ENCODE measurements at regions of chr3 and their contacts with region 1.

Region 1: GRCh38 chr3:49411968-49412631 is at the starts of genes RHOA and TCTA:
- DNase-seq: peak; percentile 99 to 100 (median 100)
- ATAC-seq: peak; percentile 95 to 97 (median 96)
- H3K4me3 ChIP-seq: peak within 1 kb of the TSS; percentile 67 to 99 (median 86)
- H3K27ac ChIP-seq: peak within 1 kb of the TSS; percentile 91 to 99 (median 98)
- H3K4me1 ChIP-seq: peaks cover 7 to 79% (median 50%) of the 10 kb centered on the region in 12 donors
- H3K27me3 ChIP-seq: no peaks in the 10 kb centered on the region
- CTCF ChIP-seq: no peak
- POLR2A ChIP-seq: peak; percentile 90 to 96
- total RNA-seq, gene RHOA: 224 to 479 (median 291) TPM
- total RNA-seq, gene TCTA: 13.2 to 25.3 (median 16.7) TPM

Region 2: DNA sequence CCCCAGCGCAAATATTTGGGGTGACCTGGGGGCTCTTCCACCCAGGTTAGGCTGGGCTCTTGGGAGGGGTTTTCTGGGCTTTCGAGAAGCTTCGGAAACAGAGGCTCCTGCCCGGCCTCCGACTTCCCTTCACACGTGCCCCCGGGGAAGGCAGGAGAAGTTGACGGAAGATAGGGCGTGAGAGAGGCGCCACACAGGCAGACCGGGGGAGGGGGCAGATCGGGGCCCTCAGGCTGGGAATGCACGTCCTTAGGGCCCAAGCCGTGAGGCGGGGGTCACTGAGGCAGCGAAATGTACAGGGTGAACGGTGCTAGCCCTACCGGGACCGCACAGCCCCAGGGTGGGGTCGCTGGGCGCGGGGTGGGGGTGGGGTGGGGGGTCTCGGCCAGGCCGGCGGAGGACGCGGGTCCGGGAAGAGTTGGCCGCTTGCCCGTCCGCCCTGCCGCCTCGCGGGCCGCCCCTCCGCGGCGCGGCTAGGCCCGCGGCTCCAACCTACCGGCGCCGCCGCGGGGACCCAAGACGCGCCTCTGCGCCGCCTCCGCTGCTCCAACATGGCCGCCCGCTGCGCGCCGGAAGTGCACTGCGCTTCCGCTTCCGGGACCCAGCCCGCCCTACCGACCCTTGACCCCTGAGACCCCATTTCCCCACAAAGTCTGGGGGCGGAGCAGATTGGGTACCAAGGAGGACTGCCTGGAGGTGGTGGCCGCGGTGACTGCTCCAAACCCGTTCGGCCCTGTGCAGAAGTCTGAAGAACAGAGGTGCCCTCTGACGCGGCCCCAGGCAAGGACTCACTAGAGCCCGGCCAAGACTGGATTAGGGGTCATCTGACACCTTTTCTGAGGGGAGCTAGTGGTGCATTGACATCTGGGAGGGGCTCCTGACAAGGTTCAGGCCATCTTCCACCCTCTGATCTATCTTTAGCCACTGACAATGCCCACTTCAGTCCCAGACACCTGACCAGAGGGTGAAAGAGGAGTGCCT is 246.0 kb before region 1 on chr3 and contains the start of gene CCDC71:
- intact Hi-C with region 1: loop called in 1 of 10 experiments (anchors 10 kb)
- DNase-seq: peak; percentile 79 to 90 (median 83)
- ATAC-seq: peak; percentile 43 to 80 (median 75)
- H3K4me3 ChIP-seq: peak within 1 kb of the TSS; percentile 78 to 99 (median 89)
- H3K27ac ChIP-seq: peak within 1 kb of the TSS; percentile 82 to 96 (median 91)
- H3K4me1 ChIP-seq: peaks cover 0 to 32% (median 24%) of the 10 kb centered on the region in 12 donors
- H3K27me3 ChIP-seq: no peaks in the 10 kb centered on the region
- CTCF ChIP-seq: no peak
- POLR2A ChIP-seq: peak in 1 of 2 donors; percentile 57
- total RNA-seq, gene CCDC71: 9.7 to 24.0 (median 14.6) TPM

Region 3: GRCh38 chr3:49428697-49429100 is 16.6 kb after region 1 on chr3:
- intact Hi-C with region 1: loop called in 2 of 10 experiments (anchors 2 kb)
- DNase-seq: no peak
- ATAC-seq: peak in 1 of 4 donors; percentile 5
- H3K4me3 ChIP-seq: peak overlapping the region; percentile 50 to 87 (median 74)
- H3K27ac ChIP-seq: peak overlapping the region; percentile 73 to 97 (median 93)
- H3K4me1 ChIP-seq: peaks cover 0 to 20% (median 7%) of the 10 kb centered on the region in 12 donors
- H3K27me3 ChIP-seq: no peaks in the 10 kb centered on the region
- CTCF ChIP-seq: no peak
- POLR2A ChIP-seq: no peak

Measured in heart left ventricle (tissue), 16 donors.